Left ventricle myocardium superior (tissue), 1 donor: ENCODE measurements at regions of chr10 and their contacts with region 1.

Region 1: DNA sequence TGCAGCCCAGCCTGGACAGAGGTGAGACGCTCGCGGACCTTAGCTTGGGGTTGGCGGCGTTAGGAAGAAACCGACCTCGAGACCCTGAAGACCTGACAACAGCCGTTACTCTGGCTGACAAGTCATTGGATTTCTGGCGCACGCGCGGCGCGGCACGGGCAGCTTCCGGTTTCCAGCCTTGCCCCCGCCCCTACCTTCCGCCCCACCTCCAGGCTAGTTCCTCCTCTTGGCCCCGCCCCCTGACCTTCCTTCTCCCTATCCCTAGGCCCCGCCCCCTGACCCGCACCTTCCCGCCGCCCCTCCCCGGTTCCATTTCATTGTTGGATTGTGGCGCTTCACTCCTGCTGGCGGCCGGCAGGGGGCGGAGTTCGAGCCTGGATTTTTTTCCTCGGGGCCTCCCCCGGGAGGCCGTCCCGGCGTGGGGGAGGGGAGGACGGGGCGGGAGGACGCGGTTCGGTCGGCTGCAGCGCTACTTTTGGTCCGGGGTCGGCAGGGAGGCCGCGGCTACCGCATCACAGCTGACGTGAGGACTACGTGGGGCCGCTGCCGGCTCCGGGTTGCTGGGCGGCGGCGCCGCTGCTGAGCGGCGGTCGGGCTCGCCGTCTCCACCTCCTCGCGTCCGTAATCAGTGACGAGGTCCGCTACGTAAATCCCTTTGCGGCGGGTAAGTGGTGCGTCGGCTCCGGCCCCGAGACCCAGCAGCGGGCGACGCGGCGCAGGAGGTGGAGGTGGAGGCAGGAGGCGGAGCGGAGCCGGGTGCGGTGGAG is at the start of gene CREM:
- DNase-seq: peak; percentile 99
- ATAC-seq: peak; percentile 96
- total RNA-seq, gene CREM: 50.3 TPM

Region 2: DNA sequence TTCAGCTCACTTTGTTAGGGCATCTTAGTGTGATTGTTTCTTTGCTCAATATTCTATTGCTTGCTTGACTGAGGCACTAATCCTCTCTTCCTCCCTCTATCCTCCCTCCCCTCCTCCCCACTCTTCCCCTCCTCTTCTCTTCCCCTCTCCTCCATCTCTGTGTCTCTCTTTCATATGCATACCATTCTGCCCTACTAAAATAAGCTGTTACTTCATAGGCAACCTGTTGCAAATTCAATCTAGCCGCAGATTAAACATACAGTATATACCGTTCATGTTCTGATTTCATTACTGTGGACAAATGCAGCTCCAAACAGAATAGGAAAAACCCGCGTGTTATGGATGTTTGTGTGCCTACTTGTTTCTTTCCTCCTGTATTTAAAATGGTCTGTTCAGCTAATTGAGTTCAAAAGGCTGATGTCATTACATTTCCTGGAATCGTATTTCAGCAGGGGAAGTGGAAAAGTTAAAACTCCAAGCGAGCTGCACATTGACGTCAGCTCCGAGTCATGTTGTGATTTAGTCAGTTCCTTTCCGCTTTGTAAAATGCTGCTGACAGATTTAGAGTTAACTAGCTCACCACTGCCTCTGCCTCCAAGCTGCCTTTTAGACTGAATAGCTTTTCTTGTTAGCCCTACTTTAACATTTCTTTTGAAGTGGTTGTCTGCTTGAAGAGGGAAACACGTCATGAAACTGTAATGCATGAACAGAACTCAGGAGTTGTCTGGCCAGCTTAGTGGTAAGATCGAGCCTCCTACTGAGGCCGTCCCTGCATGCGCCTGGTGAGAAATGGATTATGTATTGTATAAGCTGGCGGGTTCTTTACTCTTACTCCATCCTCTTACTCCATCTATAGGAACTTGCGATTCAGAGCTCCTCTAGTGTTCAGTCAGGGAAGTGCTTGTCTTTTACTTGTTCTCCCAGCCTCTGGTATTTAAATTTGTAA is 68.9 kb after region 1 on chr10:
- intact Hi-C with region 1: loop called (anchors 5 kb)
- DNase-seq: no peak
- ATAC-seq: peak; percentile 90

Region 3: DNA sequence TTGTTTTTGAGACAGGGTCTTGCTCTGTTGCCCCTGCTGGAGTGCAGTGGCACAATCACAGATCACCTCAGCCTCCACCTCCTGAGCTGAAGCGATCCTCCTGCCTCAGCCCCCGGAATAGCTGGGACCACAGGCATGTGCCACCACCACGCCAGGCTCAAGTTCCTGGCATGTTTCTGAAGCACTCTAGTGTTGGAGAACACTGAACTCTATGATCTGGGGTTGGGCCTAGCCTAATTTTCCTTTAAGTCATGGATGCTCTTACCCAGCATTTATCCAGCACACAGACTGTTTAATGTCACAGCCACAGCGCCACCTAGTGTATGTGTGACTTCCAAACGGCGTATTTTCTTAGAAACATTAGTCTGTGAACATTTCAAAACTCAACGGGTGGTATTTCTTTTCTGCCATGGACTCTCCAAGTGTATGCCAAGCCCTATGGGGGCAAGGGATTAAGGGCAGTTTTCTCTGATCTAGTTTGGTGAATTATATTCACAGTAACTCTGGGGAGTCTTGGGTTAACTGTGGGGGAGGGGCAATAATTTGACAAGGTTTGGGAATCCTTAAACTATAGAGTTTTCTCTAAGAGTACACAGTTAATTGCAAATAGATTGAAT is 91.7 kb after region 1 on chr10:
- intact Hi-C with region 1: loop called (anchors 2 kb)
- DNase-seq: peak; percentile 80
- ATAC-seq: peak; percentile 63